Naive thymus-derived CD4-positive, alpha-beta T cell (primary cell): ENCODE measurements at regions of chr6 and their contacts with region 1.

Region 1: DNA sequence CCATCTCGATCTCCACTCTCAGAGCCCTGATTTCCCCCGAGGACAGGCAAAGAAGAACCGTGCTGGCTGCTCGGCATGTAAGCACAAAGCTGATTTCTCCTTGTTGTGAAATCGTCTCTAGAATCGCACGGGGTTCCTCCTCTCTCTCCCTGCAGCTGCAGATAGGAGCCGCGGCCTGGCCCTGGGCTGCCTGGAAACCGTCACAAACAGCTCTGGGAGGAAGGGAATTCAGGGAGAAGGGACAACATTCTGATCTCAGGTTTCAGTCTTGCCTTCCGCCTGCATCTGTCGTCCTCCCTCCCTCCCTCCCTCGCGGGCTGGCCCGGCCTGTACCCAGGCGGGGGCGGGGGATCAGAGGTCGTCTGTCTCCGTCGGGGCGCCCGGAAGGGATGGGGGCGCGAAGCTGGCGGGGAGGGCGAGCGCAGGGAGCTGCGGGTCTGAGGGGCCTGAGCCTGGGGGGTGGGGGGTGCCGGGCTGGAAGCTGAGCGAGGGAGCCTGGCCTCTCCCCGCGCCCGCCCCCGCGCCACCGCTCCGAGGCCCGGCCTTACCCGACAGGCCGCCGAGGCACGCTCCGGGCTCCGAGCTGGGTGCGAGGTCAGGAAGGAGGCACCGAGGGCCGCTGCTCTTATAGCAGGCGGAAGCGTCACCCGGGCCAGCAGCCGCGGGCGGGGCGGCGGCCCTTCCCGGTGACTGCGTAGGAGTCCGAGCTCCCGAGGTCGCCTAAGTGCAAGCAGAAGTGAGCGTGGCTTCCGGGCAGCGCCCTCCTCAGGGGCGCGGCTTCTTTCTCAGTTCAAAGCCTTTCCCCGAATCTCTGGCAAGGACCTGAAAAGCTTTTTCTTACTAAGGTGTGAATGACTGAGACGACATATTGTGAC is at the start of gene SERPINB1:
- DNase-seq: peak; percentile 52 to 88 (median 67)
- ATAC-seq: peak; percentile 89
- H3K4me3 ChIP-seq: peak within 1 kb of the TSS; percentile 69
- H3K4me3 Mint-ChIP-seq: peak within 1 kb of the TSS; percentile 86 to 100 (median 92)
- H3K27ac ChIP-seq: peak within 1 kb of the TSS; percentile 85
- H3K27ac Mint-ChIP-seq: peak within 1 kb of the TSS; percentile 86 to 96 (median 95)
- H3K4me1 ChIP-seq: peaks cover 16 to 29% of the 10 kb centered on the region in 2 donors
- H3K4me1 Mint-ChIP-seq: peaks cover 33 to 68% (median 60%) of the 10 kb centered on the region in 7 donors
- H3K27me3 ChIP-seq: no peaks in the 10 kb centered on the region
- H3K27me3 Mint-ChIP-seq: no peaks in the 10 kb centered on the region
- total RNA-seq, gene SERPINB1: 43.8 to 108 (median 62.5) TPM

Region 2: DNA sequence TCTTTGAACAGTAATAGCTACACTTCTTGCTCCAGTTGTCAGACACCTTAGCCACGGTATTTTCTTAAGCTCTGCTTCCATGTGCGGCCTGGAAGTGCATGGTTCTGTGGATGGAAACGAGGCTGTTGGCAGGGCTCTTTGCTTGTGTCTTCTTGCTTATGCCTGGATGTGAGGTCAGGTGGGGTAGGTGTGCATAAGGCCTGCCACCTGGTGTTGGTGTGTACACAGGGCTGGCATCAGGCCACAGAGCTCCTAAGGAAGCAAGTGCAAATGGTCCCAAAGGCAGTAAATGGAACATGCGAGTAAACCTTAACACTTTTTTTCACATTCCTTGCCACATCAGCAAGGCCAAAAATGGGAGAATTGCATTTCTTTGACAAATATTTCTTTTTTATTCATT is 438.0 kb before region 1 on chr6:
- CTCF ChIA-PET with region 1: no interaction called
- POLR2A ChIA-PET with region 1: no interaction called
- intact Hi-C with region 1: no loop called
- DNase-seq: no peak
- ATAC-seq: no peak
- H3K4me3 ChIP-seq: no peak overlapping the region
- H3K4me3 Mint-ChIP-seq: no peak overlapping the region
- H3K27ac ChIP-seq: no peak overlapping the region
- H3K27ac Mint-ChIP-seq: no peak overlapping the region
- H3K4me1 ChIP-seq: no peaks in the 10 kb centered on the region
- H3K4me1 Mint-ChIP-seq: no peaks in the 10 kb centered on the region
- H3K27me3 ChIP-seq: no peaks in the 10 kb centered on the region
- H3K27me3 Mint-ChIP-seq: no peaks in the 10 kb centered on the region

Region 3: GRCh38 chr6:2684059-2684749 is 157.3 kb before region 1 on chr6:
- CTCF ChIA-PET with region 1: no interaction called
- POLR2A ChIA-PET with region 1: no interaction called
- intact Hi-C with region 1: no loop called
- DNase-seq: no peak
- ATAC-seq: no peak
- H3K4me3 ChIP-seq: no peak overlapping the region
- H3K4me3 Mint-ChIP-seq: no peak overlapping the region
- H3K27ac ChIP-seq: no peak overlapping the region
- H3K27ac Mint-ChIP-seq: no peak overlapping the region
- H3K4me1 ChIP-seq: no peaks in the 10 kb centered on the region
- H3K4me1 Mint-ChIP-seq: no peaks in the 10 kb centered on the region
- H3K27me3 ChIP-seq: no peaks in the 10 kb centered on the region
- H3K27me3 Mint-ChIP-seq: no peaks in the 10 kb centered on the region

Region 4: DNA sequence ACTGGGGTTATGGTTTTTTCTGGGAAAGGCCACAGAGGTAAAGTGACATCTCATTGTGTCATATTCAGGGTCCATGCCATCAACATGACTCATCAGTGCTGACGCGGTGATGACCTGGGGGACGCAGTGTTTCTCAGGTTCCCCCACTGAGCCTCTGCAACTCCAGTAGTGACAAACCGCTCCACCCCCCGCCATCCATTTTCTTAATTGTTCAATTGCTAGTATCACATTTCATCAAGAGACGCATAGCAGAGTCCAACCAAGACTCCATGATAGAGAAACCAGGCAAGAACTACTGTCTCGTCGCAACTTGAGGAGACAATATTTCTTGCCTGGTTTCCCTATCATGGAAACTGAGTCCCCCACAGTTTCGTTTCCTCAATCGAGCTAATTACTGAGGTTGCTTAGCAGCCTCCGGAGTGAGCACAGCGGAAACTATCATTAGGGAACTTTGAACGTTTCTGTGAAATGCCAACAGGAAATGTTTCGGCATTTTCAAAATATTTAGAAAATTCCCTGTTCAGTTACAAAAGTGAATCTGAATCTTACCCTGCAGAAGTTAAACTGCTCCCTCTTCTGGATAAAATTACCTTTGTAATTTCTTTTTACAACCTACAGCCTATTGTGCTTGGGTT is 12.4 kb after region 1 on chr6:
- CTCF ChIA-PET with region 1: interaction called, 35 read pairs
- POLR2A ChIA-PET with region 1: interaction called, 62 read pairs
- intact Hi-C with region 1: loop called (anchors 1 kb)
- DNase-seq: peak in 5 of 9 donors; percentile 23 to 70 (median 40)
- ATAC-seq: peak; percentile 61
- H3K4me3 ChIP-seq: peak overlapping the region; percentile 53
- H3K4me3 Mint-ChIP-seq: peak overlapping the region; percentile 65 to 97 (median 78)
- H3K27ac ChIP-seq: peak overlapping the region; percentile 65
- H3K27ac Mint-ChIP-seq: peak overlapping the region; percentile 79 to 100 (median 98)
- H3K4me1 ChIP-seq: peaks cover 59 to 61% of the 10 kb centered on the region in 2 donors
- H3K4me1 Mint-ChIP-seq: peaks cover 42 to 74% (median 71%) of the 10 kb centered on the region in 7 donors
- H3K27me3 ChIP-seq: no peaks in the 10 kb centered on the region
- H3K27me3 Mint-ChIP-seq: no peaks in the 10 kb centered on the region

Region 5: DNA sequence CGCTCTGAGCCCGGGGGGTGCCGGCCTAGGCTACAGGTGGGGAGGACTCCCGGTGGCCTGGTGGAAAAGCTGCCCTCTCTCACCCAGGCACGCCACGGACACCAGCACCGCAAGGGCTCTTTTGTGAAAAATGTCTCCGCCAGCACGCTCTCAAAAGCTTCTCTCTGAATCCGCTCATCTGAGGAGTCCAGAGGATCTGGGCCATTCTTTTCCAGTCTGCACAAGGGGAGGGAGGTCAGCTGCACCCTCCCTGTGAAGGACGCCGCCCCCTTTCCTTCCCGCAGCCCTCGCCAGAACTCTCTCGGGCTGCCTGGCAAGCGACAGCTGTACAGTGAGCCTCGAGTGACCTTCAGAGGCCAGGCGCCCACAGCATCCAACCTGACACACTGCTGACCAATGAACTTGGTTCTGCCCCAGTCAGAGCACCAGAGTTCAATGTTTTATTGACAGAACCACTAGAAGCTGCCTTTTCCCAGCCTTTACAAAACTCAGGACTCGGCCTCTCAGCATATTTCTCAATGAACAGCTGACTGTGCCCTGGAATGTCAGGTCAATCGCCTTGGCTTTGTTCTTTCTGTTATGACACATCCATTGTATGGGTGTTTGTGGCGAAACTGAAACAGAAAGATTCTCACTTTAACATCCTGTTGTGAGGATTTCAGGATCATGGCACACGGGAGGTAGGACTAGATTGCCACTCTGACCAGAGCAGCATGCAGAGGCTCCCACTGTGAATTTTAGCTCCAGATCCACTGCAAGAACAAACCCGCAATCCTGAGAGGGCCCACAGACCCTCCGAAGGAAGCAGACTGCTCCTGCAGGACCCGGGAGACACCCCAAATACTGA is 34.9 kb after region 1 on chr6:
- CTCF ChIA-PET with region 1: interaction called, 57 read pairs
- POLR2A ChIA-PET with region 1: interaction called, 30 read pairs
- intact Hi-C with region 1: loop called in 1 of 2 experiments (anchors 1 kb)
- DNase-seq: no peak
- ATAC-seq: peak; percentile 38
- H3K4me3 ChIP-seq: peak overlapping the region; percentile 50
- H3K4me3 Mint-ChIP-seq: peak overlapping the region; percentile 79 to 87 (median 84)
- H3K27ac ChIP-seq: peak overlapping the region; percentile 71
- H3K27ac Mint-ChIP-seq: peak overlapping the region; percentile 82 to 98 (median 91)
- H3K4me1 ChIP-seq: peaks cover 54 to 55% of the 10 kb centered on the region in 2 donors
- H3K4me1 Mint-ChIP-seq: peaks cover 63 to 83% (median 79%) of the 10 kb centered on the region in 7 donors
- H3K27me3 ChIP-seq: no peaks in the 10 kb centered on the region
- H3K27me3 Mint-ChIP-seq: no peaks in the 10 kb centered on the region

Region 6: GRCh38 chr6:2900821-2901644 is 59.5 kb after region 1 on chr6:
- CTCF ChIA-PET with region 1: interaction called, 40 read pairs
- POLR2A ChIA-PET with region 1: interaction called, 71 read pairs
- intact Hi-C with region 1: loop called (anchors 1 to 2 kb)
- DNase-seq: no peak
- ATAC-seq: no peak
- H3K4me3 ChIP-seq: peak overlapping the region; percentile 85
- H3K4me3 Mint-ChIP-seq: peak overlapping the region; percentile 96 to 100 (median 99)
- H3K27ac ChIP-seq: peak overlapping the region; percentile 90
- H3K27ac Mint-ChIP-seq: peak overlapping the region; percentile 88 to 98 (median 97)
- H3K4me1 ChIP-seq: peaks cover 29 to 33% of the 10 kb centered on the region in 2 donors
- H3K4me1 Mint-ChIP-seq: peaks cover 54 to 71% (median 66%) of the 10 kb centered on the region in 7 donors
- H3K27me3 ChIP-seq: no peaks in the 10 kb centered on the region
- H3K27me3 Mint-ChIP-seq: peaks cover 0 to 4% (median 0%) of the 10 kb centered on the region in 5 donors

Region 7: DNA sequence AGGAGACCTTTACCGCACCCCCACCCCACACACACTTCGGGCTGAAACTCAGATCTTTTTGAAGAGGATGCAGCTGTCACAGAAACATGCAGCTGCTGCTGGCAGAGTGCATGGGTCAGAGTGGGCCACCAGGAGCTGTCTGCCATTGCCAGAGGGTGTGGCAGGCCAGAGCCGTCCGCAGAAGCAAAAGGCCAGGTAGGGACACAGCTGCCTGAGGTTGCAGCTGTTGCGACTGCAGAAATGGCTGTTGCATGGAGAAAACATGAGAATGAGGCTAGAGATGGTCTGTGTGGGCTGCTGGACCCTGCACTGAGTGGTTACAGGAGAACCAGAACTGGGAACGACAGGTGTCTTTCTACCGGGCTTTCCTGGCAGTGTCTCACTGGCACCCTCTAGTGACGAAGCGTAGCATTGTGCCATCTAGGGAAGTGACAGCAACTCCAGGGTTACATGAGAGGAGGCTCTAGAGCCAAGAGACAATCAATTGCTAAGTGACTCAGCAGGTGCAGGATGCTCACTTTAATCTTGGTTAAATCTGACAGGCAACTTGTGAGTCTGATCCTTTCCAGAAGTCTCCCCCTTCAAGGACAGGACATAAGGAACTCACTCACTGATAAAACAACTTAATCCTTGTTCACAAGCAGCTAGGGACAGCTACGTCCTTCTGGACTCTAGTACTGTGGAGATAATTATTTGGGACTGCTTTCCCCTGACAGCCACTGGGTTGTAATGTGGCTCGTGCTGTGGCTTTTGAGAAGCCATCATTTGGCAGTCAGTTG is 90.7 kb after region 1 on chr6:
- CTCF ChIA-PET with region 1: interaction called, 53 read pairs
- POLR2A ChIA-PET with region 1: interaction called, 90 read pairs
- intact Hi-C with region 1: loop called (anchors 1 kb)
- DNase-seq: peak; percentile 61 to 87 (median 82)
- ATAC-seq: peak; percentile 99
- H3K4me3 ChIP-seq: no peak overlapping the region
- H3K4me3 Mint-ChIP-seq: peak overlapping the region in 8 of 10 donors; percentile 28 to 71 (median 44)
- H3K27ac ChIP-seq: no peak overlapping the region
- H3K27ac Mint-ChIP-seq: peak overlapping the region in 8 of 9 donors; percentile 3 to 86 (median 60)
- H3K4me1 ChIP-seq: peaks cover 8 to 20% of the 10 kb centered on the region in 2 donors
- H3K4me1 Mint-ChIP-seq: peaks cover 8 to 42% (median 26%) of the 10 kb centered on the region in 7 donors
- H3K27me3 ChIP-seq: no peaks in the 10 kb centered on the region
- H3K27me3 Mint-ChIP-seq: peaks cover 0 to 10% (median 0%) of the 10 kb centered on the region in 5 donors

Region 8: DNA sequence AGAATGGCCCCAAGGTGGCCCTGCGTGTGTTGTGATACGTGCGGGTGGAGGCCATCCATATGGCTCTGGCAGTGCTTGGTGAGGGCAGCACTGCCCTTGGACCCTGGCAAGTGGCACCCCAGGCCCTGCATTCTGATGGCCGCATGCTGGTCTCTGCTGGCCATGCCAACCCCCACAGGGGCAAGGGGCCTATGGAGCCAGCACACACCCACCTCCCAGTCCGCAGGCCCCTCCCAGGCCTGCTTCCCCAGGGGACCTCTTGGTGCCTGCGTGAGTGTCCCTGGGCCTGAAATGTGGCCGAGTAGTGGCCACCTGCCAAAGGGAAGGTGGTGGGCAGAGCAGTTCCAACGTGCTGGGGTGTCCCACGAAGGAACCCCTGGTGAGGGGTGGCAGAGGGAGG is 175.8 kb after region 1 on chr6:
- CTCF ChIA-PET with region 1: no interaction called
- POLR2A ChIA-PET with region 1: no interaction called
- intact Hi-C with region 1: no loop called
- DNase-seq: no peak
- ATAC-seq: no peak
- H3K4me3 ChIP-seq: no peak overlapping the region
- H3K4me3 Mint-ChIP-seq: no peak overlapping the region
- H3K27ac ChIP-seq: no peak overlapping the region
- H3K27ac Mint-ChIP-seq: no peak overlapping the region
- H3K4me1 ChIP-seq: no peaks in the 10 kb centered on the region
- H3K4me1 Mint-ChIP-seq: peaks cover 0 to 13% (median 0%) of the 10 kb centered on the region in 7 donors
- H3K27me3 ChIP-seq: no peaks in the 10 kb centered on the region
- H3K27me3 Mint-ChIP-seq: no peaks in the 10 kb centered on the region

Region 9: DNA sequence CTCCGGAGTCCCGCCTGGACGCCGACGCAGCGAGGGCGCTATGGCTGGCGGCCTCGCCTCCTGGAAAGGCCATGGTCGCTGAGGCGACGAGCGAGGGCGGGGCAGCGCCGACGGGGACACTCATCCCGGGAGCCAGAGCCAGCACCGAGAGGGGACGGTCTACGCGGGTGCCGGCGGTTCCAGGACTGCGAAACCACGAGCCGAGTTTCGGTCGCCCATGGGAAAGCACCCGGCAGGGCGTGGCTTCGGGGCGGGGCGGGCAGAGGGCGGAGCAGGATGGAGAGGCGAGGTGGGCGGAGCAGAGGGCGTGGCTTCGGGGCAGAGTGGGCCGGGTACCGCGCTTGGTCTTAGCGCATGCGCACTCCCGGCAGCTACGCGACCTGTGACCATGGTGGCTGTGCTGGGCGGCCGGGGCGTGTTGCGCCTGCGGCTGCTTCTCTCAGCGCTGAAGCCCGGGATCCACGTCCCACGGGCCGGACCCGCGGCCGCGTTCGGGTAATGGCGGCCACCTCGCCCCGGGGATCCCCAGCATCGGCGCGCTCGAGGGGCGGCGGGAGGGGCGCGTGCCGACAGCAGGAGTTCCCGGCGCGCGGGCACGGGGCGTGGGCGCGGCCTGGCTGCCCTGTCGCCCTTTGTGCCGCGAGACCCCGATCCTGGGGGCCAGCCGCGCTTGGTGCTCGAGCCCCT is 277.0 kb after region 1 on chr6 and contains the start of gene BPHL:
- CTCF ChIA-PET with region 1: no interaction called
- POLR2A ChIA-PET with region 1: no interaction called
- intact Hi-C with region 1: loop called in 1 of 2 experiments (anchors 5 kb)
- DNase-seq: peak; percentile 97 to 100 (median 99)
- ATAC-seq: peak; percentile 99
- H3K4me3 ChIP-seq: peak within 1 kb of the TSS; percentile 91
- H3K4me3 Mint-ChIP-seq: peak within 1 kb of the TSS; percentile 77 to 93 (median 90)
- H3K27ac ChIP-seq: peak within 1 kb of the TSS; percentile 97
- H3K27ac Mint-ChIP-seq: peak within 1 kb of the TSS; percentile 82 to 97 (median 95)
- H3K4me1 ChIP-seq: peaks cover 0 to 4% of the 10 kb centered on the region in 2 donors
- H3K4me1 Mint-ChIP-seq: peaks cover 12 to 19% (median 18%) of the 10 kb centered on the region in 7 donors
- H3K27me3 ChIP-seq: no peaks in the 10 kb centered on the region
- H3K27me3 Mint-ChIP-seq: peaks cover 0 to 5% (median 0%) of the 10 kb centered on the region in 5 donors
- total RNA-seq, gene BPHL: 7.9 to 18.0 (median 10.0) TPM